ENCODE measurements at regions of chr12 and their contacts with region 1.

Region 1: DNA sequence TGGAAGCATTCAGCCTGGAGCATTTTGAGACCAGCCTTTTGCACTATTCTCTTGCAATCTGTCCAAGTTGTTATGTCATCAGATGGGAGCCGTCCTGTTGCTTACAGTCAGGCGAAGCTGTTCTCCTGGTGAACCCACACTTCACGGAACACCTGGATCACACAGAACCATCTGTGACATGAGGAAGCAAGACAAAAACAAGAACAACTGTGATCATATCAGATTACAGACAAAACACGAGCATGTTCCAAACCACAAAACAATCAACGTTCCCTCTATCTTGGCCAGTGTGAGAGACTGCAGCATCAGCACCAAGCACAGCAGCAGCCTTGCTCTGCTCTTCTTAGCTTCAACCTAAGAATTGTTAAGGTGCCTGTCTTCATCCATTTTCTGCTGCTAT is 180.5 kb upstream of the SFSWAP start:
- DNase-seq: no peak
- H3K4me3 ChIP-seq: no peak overlapping the region
- H3K27ac ChIP-seq: no peak overlapping the region
- H3K4me1 ChIP-seq: no peaks in the 10 kb centered on the region
- H3K27me3 ChIP-seq: no peaks in the 10 kb centered on the region
- CTCF ChIP-seq: no peak
- EP300 ChIP-seq: no peak
- POLR2A ChIP-seq: no peak

Region 2: GRCh38 chr12:131494741-131495524 is 35.5 kb before region 1 on chr12:
- in situ Hi-C with region 1: no loop called
- intact Hi-C with region 1: loop called (anchors 1 kb)
- DNase-seq: no peak
- H3K4me3 ChIP-seq: no peak overlapping the region
- H3K27ac ChIP-seq: no peak overlapping the region
- H3K4me1 ChIP-seq: no peaks in the 10 kb centered on the region
- H3K27me3 ChIP-seq: no peaks in the 10 kb centered on the region
- CTCF ChIP-seq: no peak
- EP300 ChIP-seq: no peak
- POLR2A ChIP-seq: no peak